SK-N-SH (cell line): ENCODE measurements at regions of chr7 and their contacts with region 1.

Region 1: DNA sequence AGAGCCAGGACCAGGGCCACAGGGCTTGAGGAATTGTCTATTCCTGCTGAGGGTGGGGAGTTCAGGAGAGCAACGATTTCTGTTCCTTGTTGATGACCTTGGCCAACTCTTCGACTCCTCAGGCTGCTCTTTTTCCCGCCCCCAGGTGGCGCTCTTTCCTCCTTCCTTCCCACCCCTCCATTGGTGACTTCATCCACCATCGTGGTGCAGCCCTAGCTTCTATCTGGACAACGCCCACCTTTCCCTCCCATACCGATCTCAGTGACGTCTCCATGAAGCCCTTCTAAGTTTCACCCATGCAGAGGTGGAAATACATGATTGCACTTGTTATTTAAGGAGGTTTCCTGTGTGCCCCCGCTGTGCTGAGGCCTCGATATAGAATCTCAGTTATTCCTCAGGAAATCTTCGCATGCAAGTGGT is 22.1 kb upstream of the CARD11 start:
- DNase-seq: peak; percentile 46
- H3K4me3 ChIP-seq: no peak overlapping the region
- H3K27ac ChIP-seq: no peak overlapping the region
- H3K4me1 ChIP-seq: no peaks in the 10 kb centered on the region
- H3K27me3 ChIP-seq: no peaks in the 10 kb centered on the region
- CTCF ChIP-seq: peak; percentile 35; the same call in 1 of the 2 replicates
- EP300 ChIP-seq: no peak
- RAD21 ChIP-seq: peak; percentile 35

Region 2: GRCh38 chr7:2785071-2785500 is 280.6 kb before region 1 on chr7:
- CTCF ChIA-PET with region 1: no interaction called
- POLR2A ChIA-PET with region 1: no interaction called
- DNase-seq: no peak
- H3K4me3 ChIP-seq: no peak overlapping the region
- H3K27ac ChIP-seq: no peak overlapping the region
- H3K4me1 ChIP-seq: peaks cover 0 to 8% of the 10 kb centered on the region in 2 experiments; a peak in 2 of 4 replicates
- H3K27me3 ChIP-seq: no peaks in the 10 kb centered on the region
- CTCF ChIP-seq: no peak
- EP300 ChIP-seq: no peak
- RAD21 ChIP-seq: no peak

Region 3: DNA sequence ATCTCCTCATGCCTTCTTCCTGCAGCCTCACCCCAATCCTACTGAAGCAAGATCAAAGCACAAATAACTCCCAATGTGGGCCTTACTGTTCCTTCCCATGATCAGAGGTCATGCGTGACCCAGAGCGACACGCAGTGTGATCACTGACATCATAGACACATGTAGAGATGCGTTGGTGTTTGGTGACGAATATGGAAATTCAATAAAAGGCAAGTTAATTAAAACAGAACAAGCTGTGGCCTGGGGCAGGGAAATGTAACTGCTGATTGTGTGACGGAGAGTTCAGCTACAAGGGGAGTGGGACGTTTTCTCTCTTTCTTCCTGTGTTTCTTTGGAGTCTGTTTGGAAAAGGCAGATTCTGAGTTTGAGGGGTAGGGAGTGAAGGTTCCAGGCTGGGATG is 12.8 kb after region 1 on chr7:
- CTCF ChIA-PET with region 1: interaction called, 10 read pairs
- POLR2A ChIA-PET with region 1: no interaction called
- DNase-seq: peak; percentile 55
- H3K4me3 ChIP-seq: no peak overlapping the region
- H3K27ac ChIP-seq: no peak overlapping the region
- H3K4me1 ChIP-seq: peaks cover 0 to 24% of the 10 kb centered on the region in 2 experiments; a peak in 1 of 4 replicates
- H3K27me3 ChIP-seq: no peaks in the 10 kb centered on the region
- CTCF ChIP-seq: no peak
- EP300 ChIP-seq: no peak; a peak in 1 of 4 replicates
- RAD21 ChIP-seq: no peak